B cell (primary cell): ENCODE measurements at regions of chr19 and their contacts with region 1.

Region 1: DNA sequence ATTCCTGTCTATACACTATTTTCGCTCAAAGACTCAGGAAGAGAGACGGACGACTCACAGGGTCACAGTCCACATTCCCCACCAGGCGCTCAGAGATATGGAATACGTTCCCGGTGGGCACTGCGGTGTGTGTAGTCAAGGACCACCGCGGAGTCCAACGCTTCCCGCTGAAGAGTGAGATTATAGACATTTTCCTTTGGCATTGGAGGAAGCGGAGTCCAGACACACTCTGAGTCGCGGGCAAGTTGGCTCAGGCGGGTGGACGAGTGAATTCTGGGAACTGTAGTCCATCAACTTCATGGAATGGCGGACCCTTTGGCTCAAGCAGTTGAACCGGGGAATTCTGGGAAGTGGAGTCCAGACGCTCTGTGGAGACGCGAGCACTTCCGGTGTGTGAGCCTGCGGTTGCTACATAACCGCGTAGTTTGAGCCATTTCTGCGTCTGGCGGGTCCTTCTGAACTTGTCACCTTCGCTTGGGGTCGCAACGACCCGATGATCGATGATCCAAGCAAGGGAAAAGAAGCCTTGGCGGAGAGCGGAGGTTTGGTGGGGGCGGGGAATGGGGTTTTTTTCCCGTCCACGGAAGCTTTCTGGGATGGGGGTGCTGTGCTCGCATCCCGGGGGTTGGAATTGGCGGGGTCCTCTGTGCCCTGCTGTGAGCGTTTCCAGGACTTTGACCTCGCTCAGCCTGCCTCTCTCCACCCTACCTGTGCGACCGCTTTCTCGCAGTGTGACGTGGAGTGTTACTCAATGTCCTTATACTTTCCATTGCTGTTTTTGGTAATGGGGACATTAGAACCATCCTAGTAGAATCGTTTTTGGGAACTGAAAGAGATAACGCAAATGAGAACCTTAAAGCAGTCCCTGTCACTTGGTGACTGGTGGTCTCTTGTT is at the start of gene ZNF230:
- DNase-seq: peak; percentile 92
- ATAC-seq: peak; percentile 95
- H3K4me3 ChIP-seq: peak within 1 kb of the TSS; percentile 75 to 96 (median 89)
- H3K4me3 Mint-ChIP-seq: peak within 1 kb of the TSS; percentile 99
- H3K27ac ChIP-seq: peak within 1 kb of the TSS; percentile 67 to 78
- H3K27ac Mint-ChIP-seq: peak within 1 kb of the TSS; percentile 95
- H3K4me1 ChIP-seq: peaks cover 13 to 14% of the 10 kb centered on the region in 2 donors
- H3K4me1 Mint-ChIP-seq: peaks cover 19% of the 10 kb centered on the region
- H3K27me3 ChIP-seq: no peaks in the 10 kb centered on the region
- H3K27me3 Mint-ChIP-seq: no peaks in the 10 kb centered on the region
- CTCF ChIP-seq: no peak
- total RNA-seq, gene ZNF230: 16.8 TPM in 2 replicates

Region 2: DNA sequence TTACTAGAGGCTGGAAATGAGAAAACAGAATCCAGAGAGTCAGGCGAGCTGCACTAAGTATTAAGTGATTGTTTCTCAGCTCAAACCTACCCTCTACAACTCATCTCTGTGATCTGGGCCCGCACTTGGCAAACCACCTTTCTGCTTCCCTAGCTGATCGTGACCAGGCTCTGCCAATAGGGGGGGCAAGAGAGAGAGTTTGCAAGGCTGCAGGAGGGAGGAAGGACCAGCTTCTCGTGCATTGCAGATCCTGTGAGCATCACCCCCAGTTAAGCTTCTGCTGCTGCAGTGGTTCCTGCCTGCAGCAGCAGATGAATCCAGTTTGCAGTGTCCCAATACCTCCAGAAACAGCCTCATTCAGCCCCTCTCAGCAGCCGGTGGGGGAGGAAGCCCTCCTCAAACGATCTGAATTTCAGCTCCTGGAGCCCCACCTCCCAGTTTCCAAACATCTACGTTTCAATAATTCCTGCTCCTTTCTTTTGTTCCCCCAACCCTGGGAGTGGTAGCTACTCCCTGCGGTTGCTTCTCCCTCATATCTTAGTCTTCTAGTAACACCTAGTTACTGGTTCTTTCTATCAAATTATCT is 447.5 kb before region 1 on chr19:
- CTCF ChIA-PET with region 1: no interaction called
- POLR2A ChIA-PET with region 1: no interaction called
- intact Hi-C with region 1: no loop called
- DNase-seq: peak; percentile 83
- ATAC-seq: peak; percentile 94
- H3K4me3 ChIP-seq: no peak overlapping the region
- H3K4me3 Mint-ChIP-seq: no peak overlapping the region
- H3K27ac ChIP-seq: no peak overlapping the region
- H3K27ac Mint-ChIP-seq: peak overlapping the region; percentile 3
- H3K4me1 ChIP-seq: peaks cover under 1 to 10% of the 10 kb centered on the region in 2 donors
- H3K4me1 Mint-ChIP-seq: peaks cover 11% of the 10 kb centered on the region
- H3K27me3 ChIP-seq: no peaks in the 10 kb centered on the region
- H3K27me3 Mint-ChIP-seq: no peaks in the 10 kb centered on the region
- CTCF ChIP-seq: peak; percentile 83

Region 3: GRCh38 chr19:43678512-43679261 is 324.1 kb before region 1 on chr19:
- CTCF ChIA-PET with region 1: no interaction called
- POLR2A ChIA-PET with region 1: no interaction called
- intact Hi-C with region 1: no loop called
- DNase-seq: no peak
- ATAC-seq: no peak
- H3K4me3 ChIP-seq: no peak overlapping the region
- H3K4me3 Mint-ChIP-seq: no peak overlapping the region
- H3K27ac ChIP-seq: no peak overlapping the region
- H3K27ac Mint-ChIP-seq: no peak overlapping the region
- H3K4me1 ChIP-seq: no peaks in the 10 kb centered on the region
- H3K4me1 Mint-ChIP-seq: peaks cover 3% of the 10 kb centered on the region
- H3K27me3 ChIP-seq: no peaks in the 10 kb centered on the region
- H3K27me3 Mint-ChIP-seq: peaks cover 3% of the 10 kb centered on the region
- CTCF ChIP-seq: no peak

Region 4: GRCh38 chr19:43858174-43858573 is 144.6 kb before region 1 on chr19:
- CTCF ChIA-PET with region 1: no interaction called
- POLR2A ChIA-PET with region 1: no interaction called
- intact Hi-C with region 1: no loop called
- DNase-seq: no peak
- ATAC-seq: no peak
- H3K4me3 ChIP-seq: peak overlapping the region in 1 of 5 experiments; percentile 12
- H3K4me3 Mint-ChIP-seq: no peak overlapping the region
- H3K27ac ChIP-seq: no peak overlapping the region
- H3K27ac Mint-ChIP-seq: no peak overlapping the region
- H3K4me1 ChIP-seq: no peaks in the 10 kb centered on the region
- H3K4me1 Mint-ChIP-seq: no peaks in the 10 kb centered on the region
- H3K27me3 ChIP-seq: no peaks in the 10 kb centered on the region
- H3K27me3 Mint-ChIP-seq: no peaks in the 10 kb centered on the region
- CTCF ChIP-seq: no peak

Region 5: DNA sequence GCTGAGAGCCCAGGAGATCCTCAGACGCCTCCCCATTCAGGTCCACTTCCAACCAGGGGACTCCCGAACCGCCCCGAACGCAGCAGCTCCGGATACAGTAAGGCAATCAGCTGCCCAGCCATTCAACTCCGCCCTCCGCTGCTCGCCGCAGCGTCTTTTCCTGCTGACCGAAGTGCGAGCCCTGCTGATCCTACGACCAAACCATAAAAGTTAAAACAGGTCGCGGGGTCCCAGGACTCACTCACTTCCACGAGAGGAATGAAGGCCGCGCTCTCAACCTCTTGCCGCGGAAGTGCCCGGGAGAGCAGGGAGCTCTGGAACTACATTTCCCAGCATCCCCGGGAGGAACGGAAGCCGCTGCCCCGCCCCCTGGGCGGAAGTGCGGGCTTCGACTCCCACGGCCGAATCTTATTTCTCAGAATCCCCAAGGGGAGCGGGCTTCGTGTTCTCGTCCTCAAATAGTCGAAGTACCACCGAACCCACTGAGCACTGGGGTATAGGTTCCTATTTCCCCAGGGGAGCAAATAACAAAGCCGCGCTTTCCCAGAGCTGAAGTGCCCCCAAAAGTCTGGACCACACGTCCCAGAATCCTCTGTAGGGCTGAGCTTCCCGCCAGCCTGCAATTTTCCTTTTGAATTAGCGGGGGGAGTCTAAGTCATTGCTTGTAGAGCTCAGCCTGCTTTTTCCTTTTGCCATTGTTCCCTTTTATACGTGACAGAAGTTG is 67.7 kb before region 1 on chr19 and contains the start of gene ZNF45:
- CTCF ChIA-PET with region 1: no interaction called
- POLR2A ChIA-PET with region 1: no interaction called
- intact Hi-C with region 1: loop called (anchors 1 kb)
- DNase-seq: peak; percentile 91
- ATAC-seq: peak; percentile 96
- H3K4me3 ChIP-seq: peak within 1 kb of the TSS; percentile 61 to 93 (median 81)
- H3K4me3 Mint-ChIP-seq: peak within 1 kb of the TSS; percentile 97
- H3K27ac ChIP-seq: peak within 1 kb of the TSS; percentile 55 to 72
- H3K27ac Mint-ChIP-seq: peak within 1 kb of the TSS; percentile 88
- H3K4me1 ChIP-seq: peaks cover 11 to 12% of the 10 kb centered on the region in 2 donors
- H3K4me1 Mint-ChIP-seq: peaks cover 26% of the 10 kb centered on the region
- H3K27me3 ChIP-seq: no peaks in the 10 kb centered on the region
- H3K27me3 Mint-ChIP-seq: no peaks in the 10 kb centered on the region
- CTCF ChIP-seq: no peak
- total RNA-seq, gene ZNF45: 30.1 and 31.7 TPM in 2 replicates

Region 6: DNA sequence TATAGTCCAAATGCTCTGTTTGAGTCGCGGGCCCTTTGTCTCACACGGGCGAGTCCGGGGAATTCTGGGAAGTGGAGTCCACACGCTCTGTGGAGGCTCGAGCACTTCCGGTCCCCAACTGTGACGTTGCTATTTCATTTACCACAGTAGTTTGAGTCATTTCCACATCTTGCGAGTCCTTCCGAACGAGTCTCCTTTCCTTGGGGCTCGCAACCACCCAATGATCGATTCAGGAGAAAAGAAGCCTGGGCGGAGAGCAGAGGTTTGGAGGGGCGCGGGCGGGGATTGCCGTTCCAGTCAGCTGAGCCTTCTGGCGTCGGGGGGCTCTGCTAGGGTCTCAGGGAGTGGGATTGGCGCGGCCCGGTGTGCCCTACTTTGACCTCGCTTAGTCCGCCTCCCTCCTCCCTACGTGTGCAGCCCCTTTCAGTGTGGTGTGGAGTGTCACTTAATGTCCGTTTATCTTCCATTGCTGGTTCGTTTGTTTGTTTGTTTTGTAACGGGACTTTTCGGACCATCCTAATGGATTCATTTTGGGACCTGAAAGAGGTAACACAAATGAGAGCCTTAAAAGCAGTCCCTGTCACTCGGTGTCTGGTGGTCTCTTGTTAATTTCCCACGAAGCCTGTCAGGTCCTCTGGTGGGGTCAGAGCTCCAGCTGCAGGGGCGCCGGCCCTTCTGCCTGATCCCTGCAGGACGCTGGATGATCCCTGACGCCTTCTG is 22.6 kb after region 1 on chr19 and contains the start of gene ZNF222:
- CTCF ChIA-PET with region 1: no interaction called
- POLR2A ChIA-PET with region 1: interaction called, 3 read pairs
- intact Hi-C with region 1: loop called (anchors 1 kb)
- DNase-seq: peak; percentile 83
- ATAC-seq: peak; percentile 97
- H3K4me3 ChIP-seq: peak within 1 kb of the TSS; percentile 72 to 98 (median 84)
- H3K4me3 Mint-ChIP-seq: peak within 1 kb of the TSS; percentile 96
- H3K27ac ChIP-seq: peak within 1 kb of the TSS; percentile 38 to 66
- H3K27ac Mint-ChIP-seq: peak within 1 kb of the TSS; percentile 88
- H3K4me1 ChIP-seq: peaks cover 11 to 13% of the 10 kb centered on the region in 2 donors
- H3K4me1 Mint-ChIP-seq: peaks cover 19% of the 10 kb centered on the region
- H3K27me3 ChIP-seq: no peaks in the 10 kb centered on the region
- H3K27me3 Mint-ChIP-seq: peaks cover 8% of the 10 kb centered on the region
- CTCF ChIP-seq: no peak
- total RNA-seq, gene ZNF222: 7.5 and 9.1 TPM in 2 replicates

Region 7: DNA sequence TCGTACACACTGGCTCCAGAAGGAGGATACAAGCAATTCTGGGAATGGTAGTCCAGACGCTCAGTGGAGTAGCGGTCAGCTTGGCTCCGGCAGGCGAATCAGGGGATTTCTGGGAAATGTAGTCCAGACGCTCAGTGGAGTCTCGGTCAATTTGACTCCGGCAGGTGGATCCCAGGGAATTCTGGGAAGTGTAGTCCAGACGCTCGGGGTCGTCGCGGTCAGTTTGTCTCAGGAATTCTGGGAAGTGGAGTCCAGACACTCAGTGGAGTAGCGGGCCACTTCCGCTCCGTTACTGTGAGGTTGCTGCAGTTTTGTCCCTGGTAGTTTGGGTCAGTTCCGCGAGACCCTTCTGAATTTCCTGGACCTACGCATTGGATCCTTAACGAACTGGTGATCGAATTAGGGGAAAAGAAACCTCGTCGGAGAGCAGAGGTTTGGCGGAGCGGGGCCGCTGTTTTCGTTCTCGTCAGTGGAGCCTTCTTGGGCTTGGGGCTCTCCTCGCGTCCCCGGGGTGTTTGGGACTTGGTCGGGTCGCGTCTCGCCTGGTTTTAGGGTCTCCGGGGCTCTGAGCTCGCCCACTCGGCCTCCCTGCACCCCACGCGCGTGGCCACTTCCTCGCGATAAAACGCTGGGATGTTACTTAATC is 110.4 kb after region 1 on chr19 and contains the start of gene ZNF225:
- CTCF ChIA-PET with region 1: no interaction called
- POLR2A ChIA-PET with region 1: no interaction called
- intact Hi-C with region 1: loop called (anchors 1 kb)
- DNase-seq: peak; percentile 91
- ATAC-seq: peak; percentile 95
- H3K4me3 ChIP-seq: peak within 1 kb of the TSS; percentile 71 to 98 (median 86)
- H3K4me3 Mint-ChIP-seq: peak within 1 kb of the TSS; percentile 99
- H3K27ac ChIP-seq: peak within 1 kb of the TSS; percentile 45 to 65
- H3K27ac Mint-ChIP-seq: peak within 1 kb of the TSS; percentile 90
- H3K4me1 ChIP-seq: peaks cover 9 to 19% of the 10 kb centered on the region in 2 donors
- H3K4me1 Mint-ChIP-seq: peaks cover 28% of the 10 kb centered on the region
- H3K27me3 ChIP-seq: no peaks in the 10 kb centered on the region
- H3K27me3 Mint-ChIP-seq: no peaks in the 10 kb centered on the region
- CTCF ChIP-seq: no peak
- total RNA-seq, gene ZNF225: 12.1 and 13.1 TPM in 2 replicates

Region 8: GRCh38 chr19:44277331-44277730 is 274.5 kb after region 1 on chr19:
- CTCF ChIA-PET with region 1: no interaction called
- POLR2A ChIA-PET with region 1: no interaction called
- intact Hi-C with region 1: no loop called
- DNase-seq: no peak
- ATAC-seq: no peak
- H3K4me3 ChIP-seq: no peak overlapping the region
- H3K4me3 Mint-ChIP-seq: no peak overlapping the region
- H3K27ac ChIP-seq: no peak overlapping the region
- H3K27ac Mint-ChIP-seq: no peak overlapping the region
- H3K4me1 ChIP-seq: no peaks in the 10 kb centered on the region
- H3K4me1 Mint-ChIP-seq: no peaks in the 10 kb centered on the region
- H3K27me3 ChIP-seq: no peaks in the 10 kb centered on the region
- H3K27me3 Mint-ChIP-seq: no peaks in the 10 kb centered on the region
- CTCF ChIP-seq: no peak

Region 9: GRCh38 chr19:44304659-44305193 is 301.9 kb after region 1 on chr19 and contains the start of gene ZNF235:
- CTCF ChIA-PET with region 1: no interaction called
- POLR2A ChIA-PET with region 1: no interaction called
- intact Hi-C with region 1: loop called (anchors 1 kb)
- DNase-seq: peak; percentile 82
- ATAC-seq: peak; percentile 98
- H3K4me3 ChIP-seq: peak within 1 kb of the TSS; percentile 69 to 87 (median 79)
- H3K4me3 Mint-ChIP-seq: peak within 1 kb of the TSS; percentile 96
- H3K27ac ChIP-seq: peak within 1 kb of the TSS; percentile 20 to 72
- H3K27ac Mint-ChIP-seq: peak within 1 kb of the TSS; percentile 91
- H3K4me1 ChIP-seq: peaks cover 9 to 15% of the 10 kb centered on the region in 2 donors
- H3K4me1 Mint-ChIP-seq: peaks cover 24% of the 10 kb centered on the region
- H3K27me3 ChIP-seq: no peaks in the 10 kb centered on the region
- H3K27me3 Mint-ChIP-seq: peaks cover 9% of the 10 kb centered on the region
- CTCF ChIP-seq: no peak
- total RNA-seq, gene ZNF235: 18.8 and 19.5 TPM in 2 replicates